ENCODE measurements at regions of chr7 and their contacts with region 1.

Region 1: GRCh38 chr7:18693406-18693805 is 197.9 kb downstream of the HDAC9 start:
- DNase-seq: peak; percentile 56
- H3K4me3 ChIP-seq: no peak overlapping the region
- H3K27ac ChIP-seq: no peak overlapping the region
- H3K4me1 ChIP-seq: no peaks in the 10 kb centered on the region
- H3K27me3 ChIP-seq: no peaks in the 10 kb centered on the region
- CTCF ChIP-seq: peak; percentile 71 to 82

Region 2: GRCh38 chr7:19051767-19052375 is 358.5 kb after region 1 on chr7:
- CTCF ChIA-PET with region 1: no interaction called
- dilution Hi-C with region 1: no loop called
- in situ Hi-C with region 1: no loop called
- intact Hi-C with region 1: loop called (anchors 1 kb)
- DNase-seq: peak; percentile 8
- H3K4me3 ChIP-seq: no peak overlapping the region
- H3K27ac ChIP-seq: no peak overlapping the region
- H3K4me1 ChIP-seq: no peaks in the 10 kb centered on the region
- H3K27me3 ChIP-seq: no peaks in the 10 kb centered on the region
- CTCF ChIP-seq: peak; percentile 77 to 92

Region 3: GRCh38 chr7:19079066-19079465 is 385.7 kb after region 1 on chr7:
- CTCF ChIA-PET with region 1: no interaction called
- dilution Hi-C with region 1: no loop called
- in situ Hi-C with region 1: loop called in 1 of 2 experiments (anchors 10 kb)
- intact Hi-C with region 1: no loop called
- DNase-seq: peak; percentile 60
- H3K4me3 ChIP-seq: no peak overlapping the region
- H3K27ac ChIP-seq: no peak overlapping the region
- H3K4me1 ChIP-seq: peaks cover 6% of the 10 kb centered on the region
- H3K27me3 ChIP-seq: no peaks in the 10 kb centered on the region
- CTCF ChIP-seq: no peak

Region 4: DNA sequence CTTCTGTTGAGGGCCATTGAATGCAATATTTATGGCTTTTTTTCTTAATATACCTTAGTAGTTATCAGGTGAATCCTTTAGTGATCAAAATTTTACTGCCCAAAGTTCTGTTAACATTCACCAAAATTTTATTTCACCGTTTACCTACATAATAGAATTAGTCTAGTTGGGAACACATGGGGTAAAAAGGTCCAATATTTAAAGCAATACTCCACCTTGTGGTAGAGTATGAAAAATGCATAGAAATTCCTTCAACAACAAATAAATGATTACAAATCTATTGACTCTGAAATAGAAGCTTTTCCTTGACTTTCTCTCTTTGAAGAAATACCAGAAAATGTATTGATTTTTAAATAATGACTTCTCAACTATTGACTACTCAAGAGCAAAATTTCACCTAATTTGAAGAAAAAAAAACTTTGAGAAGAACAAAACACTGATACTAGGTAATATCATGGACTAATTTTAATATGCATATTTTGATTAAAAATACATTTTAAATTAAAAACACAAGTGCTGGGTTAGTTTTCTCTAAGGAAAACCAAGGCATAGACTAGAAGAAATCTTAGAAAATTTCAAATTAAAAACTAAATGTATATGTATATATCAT is 972.1 kb after region 1 on chr7:
- CTCF ChIA-PET with region 1: no interaction called
- dilution Hi-C with region 1: no loop called
- in situ Hi-C with region 1: no loop called
- intact Hi-C with region 1: loop called (anchors 10 kb)
- DNase-seq: peak; percentile 11
- H3K4me3 ChIP-seq: no peak overlapping the region
- H3K27ac ChIP-seq: no peak overlapping the region
- H3K4me1 ChIP-seq: peaks cover 4% of the 10 kb centered on the region
- H3K27me3 ChIP-seq: no peaks in the 10 kb centered on the region
- CTCF ChIP-seq: peak; percentile 52 to 64

Measured in mammary epithelial cell (primary cell).